RWPE1 (cell line): ENCODE measurements at regions of chr9 and their contacts with region 1.

Region 1: GRCh38 chr9:4738866-4739586 is 2.0 kb downstream of the AK3 start:
- DNase-seq: no peak
- H3K27ac ChIP-seq: peak overlapping the region; percentile 71
- CTCF ChIP-seq: no peak

Region 2: GRCh38 chr9:4559261-4560182 is 179.5 kb before region 1 on chr9:
- CTCF ChIA-PET with region 1: no interaction called
- POLR2A ChIA-PET with region 1: interaction called, 15 read pairs
- DNase-seq: no peak
- H3K27ac ChIP-seq: no peak overlapping the region
- CTCF ChIP-seq: no peak